ENCODE measurements at regions of chr22 and their contacts with region 1.

Region 1: GRCh38 chr22:40270748-40271373 is 75.4 kb upstream of the ADSL start:
- DNase-seq: no peak
- ATAC-seq: peak; percentile 34 to 74 (median 54)
- H3K4me3 ChIP-seq: no peak overlapping the region
- H3K27ac ChIP-seq: peak overlapping the region; percentile 64
- H3K4me1 ChIP-seq: peaks cover 14% of the 10 kb centered on the region
- H3K27me3 ChIP-seq: no peaks in the 10 kb centered on the region
- CTCF ChIP-seq: no peak

Region 2: GRCh38 chr22:40107851-40108378 is 162.9 kb before region 1 on chr22:
- intact Hi-C with region 1: no loop called
- DNase-seq: no peak
- ATAC-seq: peak; percentile 74 to 91 (median 86)
- H3K4me3 ChIP-seq: peak overlapping the region; percentile 50
- H3K27ac ChIP-seq: peak overlapping the region; percentile 79
- H3K4me1 ChIP-seq: peaks cover 46% of the 10 kb centered on the region
- H3K27me3 ChIP-seq: no peaks in the 10 kb centered on the region
- CTCF ChIP-seq: no peak

Region 3: GRCh38 chr22:40231618-40232313 is 39.1 kb before region 1 on chr22:
- intact Hi-C with region 1: loop called in 1 of 2 experiments (anchors 5 kb)
- DNase-seq: no peak
- ATAC-seq: peak; percentile 78 to 89 (median 86)
- H3K4me3 ChIP-seq: no peak overlapping the region
- H3K27ac ChIP-seq: peak overlapping the region; percentile 68
- H3K4me1 ChIP-seq: peaks cover 44% of the 10 kb centered on the region
- H3K27me3 ChIP-seq: no peaks in the 10 kb centered on the region
- CTCF ChIP-seq: no peak